Heart left ventricle (tissue), 16 donors: ENCODE measurements at regions of chrX and their contacts with region 1.

Region 1: GRCh38 chrX:97820170-97820569 is 936.5 kb downstream of the RPA4 start:
- DNase-seq: no peak
- ATAC-seq: no peak
- H3K4me3 ChIP-seq: no peak overlapping the region
- H3K27ac ChIP-seq: no peak overlapping the region
- H3K4me1 ChIP-seq: no peaks in the 10 kb centered on the region
- H3K27me3 ChIP-seq: peaks cover 0 to 28% (median 0%) of the 10 kb centered on the region in 9 donors
- CTCF ChIP-seq: no peak
- POLR2A ChIP-seq: no peak

Region 2: DNA sequence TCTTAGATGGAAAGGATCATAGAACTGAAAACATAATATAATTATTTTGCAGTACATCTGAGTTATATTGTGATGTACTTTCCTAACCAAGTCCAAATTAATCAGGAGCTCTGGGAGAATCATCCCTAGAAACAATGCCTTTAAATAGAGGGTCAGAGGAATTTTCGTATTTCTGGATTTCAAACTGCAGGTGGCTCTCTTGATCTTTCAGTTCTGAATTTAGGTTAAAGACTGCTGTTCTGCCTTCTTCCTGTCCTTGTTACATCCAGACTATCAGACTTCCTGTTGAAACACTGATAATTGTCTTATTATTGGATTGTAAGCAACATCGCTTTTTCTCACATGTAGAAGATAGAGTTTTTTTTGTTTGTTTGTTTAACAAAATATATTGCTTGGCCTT is 793.8 kb before region 1 on chrX:
- intact Hi-C with region 1: loop called in 1 of 10 experiments (anchors 10 kb)
- DNase-seq: no peak
- ATAC-seq: no peak
- H3K4me3 ChIP-seq: no peak overlapping the region
- H3K27ac ChIP-seq: no peak overlapping the region
- H3K4me1 ChIP-seq: no peaks in the 10 kb centered on the region
- H3K27me3 ChIP-seq: peaks cover 0 to 3% (median 0%) of the 10 kb centered on the region in 9 donors
- CTCF ChIP-seq: peak in 3 of 12 donors; percentile 11 to 19 (median 17)
- POLR2A ChIP-seq: no peak